AG04450 (cell line): ENCODE measurements at regions of chr20 and their contacts with region 1.

Region 1: DNA sequence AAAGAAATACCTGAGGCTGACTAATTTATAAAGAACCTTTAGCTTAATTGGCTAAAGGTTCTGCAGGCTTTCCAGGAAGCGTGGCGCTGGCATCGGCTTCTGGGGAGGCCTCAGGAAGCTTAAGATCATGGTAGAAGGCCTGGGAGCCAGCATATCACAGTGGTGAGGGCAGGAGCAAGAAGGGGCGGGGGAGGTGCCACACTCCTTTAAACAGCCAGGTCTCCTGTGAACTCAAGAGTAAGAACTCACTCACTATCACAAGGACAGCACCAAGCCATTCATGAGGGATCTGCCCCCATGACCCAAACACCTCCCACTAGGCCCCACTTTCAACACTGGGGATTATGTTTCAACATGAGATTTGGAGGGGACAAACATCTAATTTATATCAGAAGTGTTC is 34.4 kb upstream of the SLC4A11 start:
- DNase-seq: no peak
- H3K4me3 ChIP-seq: no peak overlapping the region
- H3K27ac ChIP-seq: no peak overlapping the region
- H3K27me3 ChIP-seq: no peaks in the 10 kb centered on the region
- CTCF ChIP-seq: no peak

Region 2: GRCh38 chr20:3312940-3313682 is 39.7 kb after region 1 on chr20:
- CTCF ChIA-PET with region 1: interaction called, 10 read pairs
- POLR2A ChIA-PET with region 1: no interaction called
- DNase-seq: no peak
- H3K4me3 ChIP-seq: no peak overlapping the region
- H3K27ac ChIP-seq: peak overlapping the region; percentile 73
- H3K27me3 ChIP-seq: no peaks in the 10 kb centered on the region
- CTCF ChIP-seq: no peak